ENCODE measurements at regions of chr11 and their contacts with region 1.

Region 1: DNA sequence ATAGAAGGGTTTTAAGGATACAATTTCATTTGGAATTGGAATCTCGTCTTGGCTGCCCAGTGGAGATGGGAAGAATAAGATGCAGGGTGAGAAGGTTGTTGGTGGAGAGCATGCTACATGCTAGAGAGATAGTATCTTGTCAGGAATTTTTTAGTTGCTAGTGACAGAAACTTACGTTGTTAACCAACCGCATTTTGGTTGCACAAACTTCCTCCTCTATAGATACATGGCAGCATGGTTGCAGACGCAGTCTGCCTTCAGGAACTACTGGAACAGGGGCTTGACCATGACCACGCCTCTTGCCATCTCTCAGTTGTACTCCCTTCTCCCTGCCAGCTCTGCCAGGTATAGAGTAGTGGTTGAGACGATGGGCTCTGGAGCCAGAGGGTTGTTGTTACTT is 13.5 kb upstream of the CCDC90B start:
- DNase-seq: no peak
- ATAC-seq: no peak
- H3K4me3 ChIP-seq: no peak overlapping the region
- H3K27ac ChIP-seq: no peak overlapping the region
- H3K4me1 ChIP-seq: no peaks in the 10 kb centered on the region
- H3K27me3 ChIP-seq: no peaks in the 10 kb centered on the region
- CTCF ChIP-seq: no peak
- POLR2A ChIP-seq: no peak

Region 2: GRCh38 chr11:82895437-82896091 is 404.1 kb before region 1 on chr11:
- intact Hi-C with region 1: no loop called
- DNase-seq: peak in 1 of 4 donors; percentile 17
- ATAC-seq: no peak
- H3K4me3 ChIP-seq: no peak overlapping the region
- H3K27ac ChIP-seq: no peak overlapping the region
- H3K4me1 ChIP-seq: peaks cover 12% of the 10 kb centered on the region
- H3K27me3 ChIP-seq: no peaks in the 10 kb centered on the region
- CTCF ChIP-seq: no peak
- POLR2A ChIP-seq: no peak

Region 3: GRCh38 chr11:83813296-83813695 is 513.6 kb after region 1 on chr11:
- intact Hi-C with region 1: loop called (anchors 5 kb)
- DNase-seq: no peak
- ATAC-seq: no peak
- H3K4me3 ChIP-seq: no peak overlapping the region
- H3K27ac ChIP-seq: no peak overlapping the region
- H3K4me1 ChIP-seq: no peaks in the 10 kb centered on the region
- H3K27me3 ChIP-seq: no peaks in the 10 kb centered on the region
- CTCF ChIP-seq: no peak
- POLR2A ChIP-seq: no peak

Measured in body of pancreas (tissue), 4 donors.